ENCODE measurements at regions of chr12 and their contacts with region 1.

Region 1: DNA sequence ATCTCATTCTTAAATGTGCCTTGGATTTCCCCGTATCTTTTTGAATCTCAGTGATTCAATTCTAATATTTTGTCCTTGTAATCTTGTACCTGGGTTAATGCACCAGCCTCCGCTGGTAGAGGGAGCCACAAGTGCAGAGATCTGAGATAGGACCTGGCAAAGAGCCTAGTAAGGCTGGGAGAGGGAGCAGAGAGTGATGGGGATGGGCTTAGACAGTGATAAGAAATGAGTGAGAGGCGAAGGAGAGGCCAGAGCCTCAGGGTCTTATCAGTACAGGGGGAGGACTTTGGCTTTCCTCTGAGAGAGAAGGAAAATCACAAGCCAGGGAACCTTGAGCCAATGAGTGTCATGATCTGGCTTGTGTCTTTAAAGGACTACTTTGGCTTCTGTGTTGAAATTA is 30.5 kb upstream of the LMNTD1 start:
- DNase-seq: peak; percentile 9
- H3K4me3 Mint-ChIP-seq: no peak overlapping the region
- H3K27ac Mint-ChIP-seq: no peak overlapping the region
- H3K4me1 Mint-ChIP-seq: no peaks in the 10 kb centered on the region
- H3K27me3 Mint-ChIP-seq: peaks cover 9% of the 10 kb centered on the region
- CTCF ChIP-seq: no peak

Region 2: DNA sequence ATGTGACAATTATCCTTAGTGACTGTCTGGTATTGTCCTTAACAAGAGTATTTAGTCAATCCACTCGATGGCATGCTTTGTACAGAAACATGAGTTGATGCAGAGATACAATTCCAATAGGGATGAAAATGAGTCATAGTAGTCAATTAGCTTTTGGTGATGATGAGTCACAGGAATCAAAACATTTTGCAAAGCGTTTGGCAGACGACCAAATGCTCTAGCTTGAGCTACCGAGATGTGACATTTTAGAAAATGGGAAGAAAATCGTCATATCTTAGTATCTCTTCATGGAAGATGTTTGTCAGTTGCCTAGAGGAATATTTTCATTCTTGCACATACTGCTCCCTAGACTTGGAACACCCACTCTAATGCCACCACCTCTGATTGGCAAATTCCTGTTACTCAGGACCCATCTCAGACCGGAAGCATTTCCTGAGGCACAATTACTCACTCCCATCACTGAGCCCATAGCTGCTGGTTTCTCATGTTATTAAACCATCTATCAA is 125.4 kb before region 1 on chr12:
- CTCF ChIA-PET with region 1: no interaction called
- intact Hi-C with region 1: no loop called
- DNase-seq: peak; percentile 44
- H3K4me3 Mint-ChIP-seq: peak overlapping the region; percentile 39
- H3K27ac Mint-ChIP-seq: no peak overlapping the region
- H3K4me1 Mint-ChIP-seq: no peaks in the 10 kb centered on the region
- H3K27me3 Mint-ChIP-seq: no peaks in the 10 kb centered on the region
- CTCF ChIP-seq: no peak

Region 3: DNA sequence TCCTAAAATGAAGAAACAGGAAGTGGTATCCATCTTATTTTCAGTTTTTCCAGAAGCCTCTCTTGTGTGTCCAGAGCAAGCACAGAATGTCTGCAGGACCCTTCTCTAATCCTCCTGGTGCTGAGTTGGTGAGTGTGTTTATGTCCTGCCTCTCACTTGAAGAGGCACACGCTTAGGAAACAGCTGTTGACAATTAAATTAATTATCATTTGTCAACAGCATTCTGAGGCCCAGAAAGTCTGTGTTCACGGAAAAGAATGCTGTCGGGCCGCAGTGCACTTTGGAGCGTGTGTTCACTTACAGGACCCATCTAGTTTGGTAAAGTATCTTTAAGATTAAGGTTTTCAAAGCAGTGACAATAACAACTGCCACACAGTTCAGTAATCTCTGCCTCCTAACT is 100.9 kb before region 1 on chr12:
- CTCF ChIA-PET with region 1: no interaction called
- intact Hi-C with region 1: no loop called
- DNase-seq: no peak
- H3K4me3 Mint-ChIP-seq: no peak overlapping the region
- H3K27ac Mint-ChIP-seq: no peak overlapping the region
- H3K4me1 Mint-ChIP-seq: no peaks in the 10 kb centered on the region
- H3K27me3 Mint-ChIP-seq: no peaks in the 10 kb centered on the region
- CTCF ChIP-seq: no peak

Region 4: GRCh38 chr12:26017484-26018206 is 434.1 kb after region 1 on chr12:
- CTCF ChIA-PET with region 1: no interaction called
- intact Hi-C with region 1: loop called (anchors 5 kb)
- DNase-seq: peak; percentile 47
- H3K4me3 Mint-ChIP-seq: no peak overlapping the region
- H3K27ac Mint-ChIP-seq: no peak overlapping the region
- H3K4me1 Mint-ChIP-seq: no peaks in the 10 kb centered on the region
- H3K27me3 Mint-ChIP-seq: no peaks in the 10 kb centered on the region
- CTCF ChIP-seq: peak; percentile 73

Measured in Calu3 (cell line).